ENCODE measurements at regions of chr20 and their contacts with region 1.

Region 1: DNA sequence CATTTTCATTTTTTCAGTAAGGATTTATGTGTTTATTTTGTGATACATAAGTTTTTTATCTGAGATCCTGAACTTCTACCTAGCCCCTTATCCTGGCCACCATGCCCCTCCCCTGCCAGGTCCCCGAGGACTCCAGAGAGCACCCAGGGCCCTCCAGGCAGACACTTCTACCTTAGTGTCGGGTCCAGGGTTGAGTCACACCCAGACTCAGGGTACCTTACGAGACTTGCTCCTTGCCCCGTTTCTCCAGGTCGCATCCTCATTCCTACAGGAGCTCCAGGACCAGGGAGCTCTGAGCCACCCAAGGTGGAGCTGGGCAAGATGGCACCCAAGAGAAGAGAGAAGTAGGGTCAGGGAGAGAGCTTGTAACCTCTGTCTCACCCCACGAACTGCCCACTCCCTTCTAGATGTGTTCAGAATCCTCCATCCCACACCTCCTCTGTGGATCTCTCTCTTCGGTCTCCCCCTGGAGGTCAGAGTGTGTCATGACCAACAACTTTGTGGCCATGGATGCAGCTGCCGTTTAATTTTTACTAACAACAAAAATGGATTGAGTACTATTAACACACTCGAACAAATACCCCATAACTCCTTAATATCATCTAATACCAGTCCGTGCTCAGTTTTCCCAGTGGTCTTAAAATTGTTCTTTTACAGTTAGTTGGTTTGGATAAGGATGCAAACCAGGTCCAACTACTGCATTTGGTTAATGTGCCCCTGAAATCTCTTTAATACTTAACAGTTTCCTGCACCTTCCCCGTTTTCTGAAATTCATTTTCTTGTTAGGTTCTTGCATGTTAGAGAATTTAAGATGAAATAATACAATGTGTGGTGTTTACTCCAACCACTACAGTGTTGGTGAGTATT is 130.6 kb upstream of the INSM1 start:
- DNase-seq: peak; percentile 65
- H3K4me3 Mint-ChIP-seq: no peak overlapping the region
- H3K27ac Mint-ChIP-seq: peak overlapping the region; percentile 4
- H3K4me1 Mint-ChIP-seq: peaks cover 7% of the 10 kb centered on the region
- H3K27me3 Mint-ChIP-seq: no peaks in the 10 kb centered on the region
- CTCF ChIP-seq: peak; percentile 59

Region 2: GRCh38 chr20:20052074-20052970 is 185.0 kb before region 1 on chr20 and contains the starts of genes CFAP61 and CRNKL1:
- CTCF ChIA-PET with region 1: interaction called, 22 read pairs
- POLR2A ChIA-PET with region 1: no interaction called
- intact Hi-C with region 1: no loop called
- DNase-seq: peak; percentile 96
- H3K4me3 Mint-ChIP-seq: peak within 1 kb of the TSS; percentile 97
- H3K27ac Mint-ChIP-seq: peak within 1 kb of the TSS; percentile 96
- H3K4me1 Mint-ChIP-seq: peaks cover 10% of the 10 kb centered on the region
- H3K27me3 Mint-ChIP-seq: no peaks in the 10 kb centered on the region
- CTCF ChIP-seq: no peak
- total RNA-seq, gene CFAP61: 1.4 and 1.5 TPM in 2 replicates
- total RNA-seq, gene CRNKL1: 19.4 and 20.1 TPM in 2 replicates

Region 3: DNA sequence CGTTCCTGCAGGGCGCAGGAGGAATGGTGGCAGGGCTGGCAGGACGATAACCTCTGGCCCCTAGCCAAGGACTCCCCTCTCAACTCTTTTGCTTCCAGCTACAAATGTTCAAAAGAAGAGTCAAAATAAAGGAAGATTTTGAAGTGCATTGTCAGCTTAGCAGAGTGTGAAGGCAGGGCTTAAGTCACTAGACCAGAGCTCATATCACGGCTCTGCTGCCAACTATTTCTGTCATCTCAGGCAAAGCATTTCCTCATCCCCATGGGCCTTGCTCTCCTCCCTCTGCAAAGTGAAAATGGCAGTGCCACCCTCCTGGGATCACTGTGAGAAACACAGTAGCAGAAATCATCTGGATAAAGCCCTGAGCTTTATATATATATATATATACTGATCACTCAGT is 148.3 kb before region 1 on chr20:
- CTCF ChIA-PET with region 1: interaction called, 116 read pairs
- POLR2A ChIA-PET with region 1: interaction called, 18 read pairs
- intact Hi-C with region 1: loop called (anchors 1 kb)
- DNase-seq: no peak
- H3K4me3 Mint-ChIP-seq: no peak overlapping the region
- H3K27ac Mint-ChIP-seq: no peak overlapping the region
- H3K4me1 Mint-ChIP-seq: peaks cover 32% of the 10 kb centered on the region
- H3K27me3 Mint-ChIP-seq: no peaks in the 10 kb centered on the region
- CTCF ChIP-seq: no peak

Region 4: DNA sequence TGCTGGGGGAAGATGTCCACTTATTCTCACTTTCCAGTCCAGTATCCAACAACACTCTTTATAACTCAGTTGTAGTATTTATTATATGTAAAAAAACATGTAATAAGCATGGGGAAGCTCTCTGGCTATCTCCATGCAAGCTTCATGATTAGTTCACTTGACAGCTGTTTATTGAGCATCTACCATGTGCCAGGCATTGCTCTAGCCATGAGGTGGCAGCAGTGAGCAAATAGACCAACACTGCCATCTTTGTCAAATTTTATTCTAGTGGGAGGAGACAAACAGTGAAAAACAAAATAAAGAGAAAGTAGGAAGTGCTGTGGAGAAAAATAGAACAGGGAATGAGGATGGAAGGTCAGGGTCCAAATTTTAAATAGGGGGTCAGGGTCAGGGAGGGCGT is 53.2 kb before region 1 on chr20:
- CTCF ChIA-PET with region 1: interaction called, 11 read pairs
- POLR2A ChIA-PET with region 1: no interaction called
- intact Hi-C with region 1: no loop called
- DNase-seq: peak; percentile 6
- H3K4me3 Mint-ChIP-seq: no peak overlapping the region
- H3K27ac Mint-ChIP-seq: no peak overlapping the region
- H3K4me1 Mint-ChIP-seq: no peaks in the 10 kb centered on the region
- H3K27me3 Mint-ChIP-seq: no peaks in the 10 kb centered on the region
- CTCF ChIP-seq: peak; percentile 32

Region 5: DNA sequence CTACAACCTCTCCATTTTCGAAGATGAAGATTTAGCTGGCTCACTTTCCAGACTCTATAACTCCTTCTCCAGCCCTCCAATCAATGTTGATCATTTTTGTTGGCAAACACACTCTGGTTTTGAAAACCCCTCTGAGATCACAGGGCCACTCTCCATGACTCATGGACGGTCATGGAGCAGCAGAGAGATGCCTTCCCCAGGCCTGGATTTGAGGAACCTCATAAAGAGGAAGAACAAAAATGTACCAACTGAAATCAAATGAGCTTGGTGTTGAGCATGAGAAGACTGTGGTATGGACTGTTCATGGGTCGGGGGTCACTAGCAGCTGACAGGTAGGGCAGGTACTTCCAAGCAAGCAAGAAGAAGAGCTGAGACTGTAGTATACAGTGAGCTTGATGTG is 17.8 kb after region 1 on chr20:
- CTCF ChIA-PET with region 1: interaction called, 24 read pairs
- POLR2A ChIA-PET with region 1: interaction called, 4 read pairs
- intact Hi-C with region 1: no loop called
- DNase-seq: no peak
- H3K4me3 Mint-ChIP-seq: no peak overlapping the region
- H3K27ac Mint-ChIP-seq: no peak overlapping the region
- H3K4me1 Mint-ChIP-seq: no peaks in the 10 kb centered on the region
- H3K27me3 Mint-ChIP-seq: no peaks in the 10 kb centered on the region
- CTCF ChIP-seq: no peak

Region 6: DNA sequence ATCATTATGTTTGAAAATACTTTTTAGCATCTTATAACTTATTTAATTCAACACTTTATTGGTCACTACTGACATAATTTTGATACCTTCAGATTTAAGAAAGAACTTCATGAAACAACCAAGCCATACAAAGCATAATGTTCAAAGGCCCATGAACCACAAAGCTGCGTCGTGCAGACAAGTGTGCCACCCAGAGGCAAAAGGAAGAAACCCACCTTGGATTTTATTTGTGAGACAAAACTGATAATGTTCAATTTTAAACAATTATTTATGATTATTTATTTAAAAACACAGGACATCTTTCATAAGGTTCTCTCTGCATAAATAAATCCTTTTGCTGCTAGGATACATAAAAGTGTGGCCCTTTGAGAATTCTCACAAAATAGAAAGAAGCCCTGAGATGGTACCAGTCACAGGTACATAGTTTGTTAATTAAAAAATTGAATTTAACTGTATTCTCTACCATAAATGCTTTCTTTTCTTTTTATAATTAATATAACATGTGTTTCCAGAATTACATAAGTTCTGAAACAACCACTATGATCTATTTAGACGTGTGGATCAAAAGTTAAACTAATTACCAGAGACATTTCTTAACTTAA is 331.4 kb after region 1 on chr20:
- CTCF ChIA-PET with region 1: interaction called, 5 read pairs
- POLR2A ChIA-PET with region 1: no interaction called
- intact Hi-C with region 1: loop called (anchors 5 kb)
- DNase-seq: peak; percentile 49
- H3K4me3 Mint-ChIP-seq: no peak overlapping the region
- H3K27ac Mint-ChIP-seq: no peak overlapping the region
- H3K4me1 Mint-ChIP-seq: no peaks in the 10 kb centered on the region
- H3K27me3 Mint-ChIP-seq: no peaks in the 10 kb centered on the region
- CTCF ChIP-seq: peak; percentile 81

Region 7: DNA sequence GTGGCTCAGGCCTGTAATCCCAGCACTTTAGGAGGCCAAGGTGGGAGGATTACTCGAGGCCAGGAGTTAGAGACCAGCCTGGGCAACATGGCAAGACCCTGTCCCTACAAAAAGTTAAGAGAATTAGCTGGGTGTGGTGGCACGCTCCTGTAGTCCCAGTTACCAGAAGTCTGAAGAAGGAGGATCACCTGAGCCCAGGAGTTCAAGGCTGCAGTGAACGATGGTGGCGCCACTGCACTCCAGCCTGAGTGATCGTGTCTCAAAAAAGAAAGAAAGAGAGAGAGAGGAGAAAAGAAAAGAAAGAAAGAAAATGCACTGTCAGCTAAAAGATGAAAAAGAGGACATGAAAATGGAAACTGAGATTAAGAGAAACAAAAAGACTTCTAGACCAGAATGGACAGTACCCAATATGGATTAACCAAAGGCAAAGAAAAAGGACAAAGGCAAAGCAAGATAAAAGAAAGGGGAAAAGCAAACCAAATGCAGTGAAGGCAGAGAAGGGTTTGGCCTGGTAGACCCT is 484.1 kb after region 1 on chr20:
- CTCF ChIA-PET with region 1: no interaction called
- POLR2A ChIA-PET with region 1: no interaction called
- intact Hi-C with region 1: no loop called
- DNase-seq: no peak
- H3K4me3 Mint-ChIP-seq: no peak overlapping the region
- H3K27ac Mint-ChIP-seq: no peak overlapping the region
- H3K4me1 Mint-ChIP-seq: no peaks in the 10 kb centered on the region
- H3K27me3 Mint-ChIP-seq: no peaks in the 10 kb centered on the region
- CTCF ChIP-seq: no peak

Measured in MCF 10A (cell line).